HEK293 (cell line): ENCODE measurements at regions of chr20 and their contacts with region 1.

Region 1: GRCh38 chr20:3786665-3787323 is at the start of gene CENPB:
- H3K4me3 ChIP-seq: peak within 1 kb of the TSS; percentile 49
- H3K27ac ChIP-seq: peak within 1 kb of the TSS; percentile 76; the same call in 1 of the 2 replicates
- H3K4me1 ChIP-seq: peaks cover 17% of the 10 kb centered on the region; the same call in 1 of the 2 replicates
- CTCF ChIP-seq: peak; percentile 42; the same call in 1 of the 2 replicates

Region 2: DNA sequence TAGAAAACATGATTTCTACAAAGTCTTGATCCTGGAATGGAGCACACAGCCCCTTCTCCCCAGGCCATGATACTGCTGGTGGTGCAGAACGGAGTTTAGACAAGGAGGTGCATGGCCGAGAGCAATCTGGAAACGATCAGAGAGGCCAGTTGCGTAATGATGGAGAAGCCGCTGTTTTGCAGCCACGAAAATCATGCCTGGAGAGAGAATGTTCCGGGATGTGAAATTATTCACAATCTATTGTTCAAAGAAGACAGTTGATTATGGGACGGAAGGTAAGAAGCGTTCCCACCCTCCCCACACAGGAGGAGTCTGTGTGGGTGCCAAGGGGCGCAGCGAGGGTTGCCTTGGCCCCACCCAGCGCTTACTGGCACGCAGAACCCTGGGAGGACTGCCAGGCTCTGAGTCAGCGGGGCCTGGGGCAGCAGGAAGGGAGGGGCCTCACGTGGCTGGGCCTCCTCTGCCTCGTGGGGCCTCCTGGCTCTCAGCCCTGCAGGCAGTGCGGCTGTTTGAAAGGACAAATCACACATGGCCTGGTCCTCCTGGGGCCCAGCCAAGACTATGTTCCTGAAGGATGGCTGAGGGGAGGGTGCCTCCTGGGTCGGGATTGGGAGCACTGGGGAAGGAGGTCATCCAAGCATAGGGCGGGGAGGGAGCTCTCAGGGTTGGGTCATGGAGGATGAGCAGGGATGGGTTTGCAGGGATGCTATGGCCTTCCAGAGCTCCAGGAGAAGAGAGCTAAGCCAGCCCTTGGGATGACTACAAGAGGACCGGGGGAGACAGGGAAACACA is 24.9 kb after region 1 on chr20:
- CTCF ChIA-PET with region 1: interaction called, 10 read pairs
- POLR2A ChIA-PET with region 1: interaction called, 7 read pairs
- H3K4me3 ChIP-seq: peak overlapping the region; percentile 17
- H3K27ac ChIP-seq: peak overlapping the region; percentile 84
- H3K4me1 ChIP-seq: peaks cover 35% of the 10 kb centered on the region
- CTCF ChIP-seq: peak; percentile 9; the same call in 1 of the 2 replicates

Region 3: DNA sequence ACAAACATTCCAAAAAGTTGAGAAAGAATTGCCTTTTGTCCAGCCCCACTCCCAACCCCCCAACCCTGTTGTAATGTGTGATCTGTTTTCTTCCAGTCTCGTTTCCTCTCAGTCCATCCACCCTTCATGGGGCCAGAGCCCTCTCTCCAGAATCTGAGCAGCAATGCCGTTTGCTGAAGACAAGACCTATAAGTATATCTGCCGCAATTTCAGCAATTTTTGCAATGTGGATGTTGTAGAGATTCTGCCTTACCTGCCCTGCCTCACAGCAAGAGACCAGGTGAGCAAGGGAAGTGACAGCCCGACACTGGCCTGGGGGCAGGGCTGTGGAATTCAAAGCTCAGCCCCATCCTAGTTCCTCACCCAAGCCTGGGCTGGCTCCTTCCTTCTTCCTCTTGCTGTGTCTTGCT is 67.7 kb after region 1 on chr20:
- CTCF ChIA-PET with region 1: interaction called, 20 read pairs
- POLR2A ChIA-PET with region 1: interaction called, 5 read pairs
- H3K4me3 ChIP-seq: no peak overlapping the region
- H3K27ac ChIP-seq: no peak overlapping the region
- H3K4me1 ChIP-seq: no peaks in the 10 kb centered on the region
- CTCF ChIP-seq: no peak

Region 4: GRCh38 chr20:3927486-3928291 is 140.9 kb after region 1 on chr20:
- CTCF ChIA-PET with region 1: no interaction called
- POLR2A ChIA-PET with region 1: no interaction called
- H3K4me3 ChIP-seq: no peak overlapping the region
- H3K27ac ChIP-seq: peak overlapping the region; percentile 30; the same call in 1 of the 2 replicates
- H3K4me1 ChIP-seq: no peaks in the 10 kb centered on the region
- CTCF ChIP-seq: no peak